AG04449 (cell line): ENCODE measurements at regions of chr14 and their contacts with region 1.

Region 1: GRCh38 chr14:24241829-24242443 is 487 bp downstream of the TINF2 start:
- DNase-seq: no peak
- H3K4me3 ChIP-seq: peak overlapping the region; percentile 91
- CTCF ChIP-seq: peak; percentile 65

Region 2: DNA sequence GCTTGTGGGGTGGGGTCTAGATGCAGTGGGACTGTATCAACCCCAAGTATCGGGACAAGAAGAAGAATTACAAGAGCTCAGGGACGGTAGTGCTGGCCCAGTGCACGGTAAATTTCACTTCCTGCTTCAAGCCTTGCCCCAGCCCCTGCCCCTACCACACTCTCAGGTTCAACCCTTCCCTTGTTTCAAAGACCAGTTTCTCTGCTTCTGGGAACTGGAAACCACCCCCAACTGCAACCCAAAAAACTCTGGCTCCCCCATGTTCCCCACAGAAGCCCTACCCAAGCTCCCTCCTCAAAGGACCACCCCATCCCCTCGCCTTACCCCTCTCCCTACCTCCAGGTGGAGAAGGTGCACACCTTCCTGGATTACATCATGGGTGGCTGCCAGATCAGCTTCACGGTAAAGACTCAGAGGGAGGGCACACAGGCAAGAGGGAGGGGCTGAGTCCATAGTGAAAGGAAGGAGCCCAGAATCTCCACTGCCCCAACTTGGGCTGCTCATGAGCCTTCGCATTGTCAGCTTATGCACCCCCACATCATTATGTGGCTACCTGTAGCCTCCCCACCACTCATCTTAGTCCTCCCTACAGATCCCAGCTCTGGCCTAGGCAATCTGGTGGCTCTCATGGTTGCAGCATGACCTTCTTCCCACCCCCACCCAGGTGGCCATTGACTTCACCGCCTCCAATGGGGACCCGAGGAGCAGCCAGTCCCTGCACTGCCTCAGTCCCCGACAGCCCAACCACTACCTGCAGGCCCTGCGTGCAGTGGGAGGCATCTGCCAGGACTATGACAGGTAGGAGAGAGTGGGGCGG is 166.2 kb before region 1 on chr14:
- CTCF ChIA-PET with region 1: no interaction called
- POLR2A ChIA-PET with region 1: no interaction called
- DNase-seq: no peak
- H3K4me3 ChIP-seq: no peak overlapping the region
- CTCF ChIP-seq: no peak

Region 3: DNA sequence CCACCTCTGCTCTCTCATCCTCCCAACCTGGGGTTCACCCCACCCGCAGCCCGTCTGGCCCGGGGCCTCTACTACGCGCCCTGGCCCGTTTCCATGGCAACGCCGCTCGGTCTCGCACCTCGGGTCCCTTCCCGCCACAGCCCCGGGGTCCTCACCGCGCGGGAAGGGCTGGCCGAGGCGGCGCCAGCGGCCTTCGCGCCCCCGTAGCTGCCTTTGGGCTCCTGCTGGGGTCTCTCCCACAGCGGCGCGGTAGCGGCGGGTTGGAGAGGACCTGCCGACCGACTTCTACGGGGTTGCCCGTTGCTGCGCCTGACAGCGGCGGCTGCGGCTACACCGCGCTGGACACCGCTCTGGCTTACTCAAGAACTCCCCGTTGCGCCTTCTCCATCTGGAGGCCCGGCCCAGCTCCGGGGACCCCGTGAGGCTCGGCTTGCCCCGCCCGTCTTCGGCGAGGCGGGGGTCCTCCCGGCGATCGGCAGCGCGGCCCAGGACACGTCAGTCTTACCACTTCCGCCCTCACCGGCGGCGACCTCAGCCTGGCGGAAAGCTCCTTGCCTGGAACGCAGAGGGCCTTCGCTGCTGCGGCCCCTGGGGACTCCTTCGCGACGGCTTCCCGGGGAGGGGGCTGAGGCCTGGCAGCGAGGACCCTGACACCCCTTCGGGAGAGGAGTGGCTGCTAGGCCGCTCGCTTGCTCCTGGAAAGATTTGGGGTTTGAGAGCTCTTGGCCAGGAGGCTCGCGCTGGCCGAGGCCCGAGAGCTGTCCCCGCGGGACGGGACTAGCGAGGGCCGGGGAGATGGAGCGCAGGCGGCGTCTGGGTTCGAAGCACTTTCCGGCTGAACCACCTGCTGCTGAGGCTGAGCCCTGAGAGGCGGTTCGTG is 46.5 kb before region 1 on chr14 and contains the start of gene TM9SF1:
- CTCF ChIA-PET with region 1: interaction called, 6 read pairs
- POLR2A ChIA-PET with region 1: interaction called, 10 read pairs
- DNase-seq: peak; percentile 34
- H3K4me3 ChIP-seq: peak within 1 kb of the TSS; percentile 92
- CTCF ChIP-seq: no peak

Region 4: GRCh38 chr14:24259252-24259995 is 17.5 kb after region 1 on chr14:
- CTCF ChIA-PET with region 1: interaction called, 155 read pairs
- POLR2A ChIA-PET with region 1: interaction called, 6 read pairs
- DNase-seq: no peak
- H3K4me3 ChIP-seq: no peak overlapping the region
- CTCF ChIP-seq: no peak

Region 5: GRCh38 chr14:24279301-24280186 is 37.6 kb after region 1 on chr14:
- CTCF ChIA-PET with region 1: interaction called, 15 read pairs
- POLR2A ChIA-PET with region 1: no interaction called
- DNase-seq: no peak
- H3K4me3 ChIP-seq: no peak overlapping the region
- CTCF ChIP-seq: no peak

Region 6: GRCh38 chr14:24310646-24311604 is 69.0 kb after region 1 on chr14 and contains the start of gene LTB4R:
- CTCF ChIA-PET with region 1: interaction called, 118 read pairs
- POLR2A ChIA-PET with region 1: interaction called, 7 read pairs
- DNase-seq: no peak
- H3K4me3 ChIP-seq: peak within 1 kb of the TSS; percentile 33
- CTCF ChIP-seq: peak; percentile 48

Region 7: DNA sequence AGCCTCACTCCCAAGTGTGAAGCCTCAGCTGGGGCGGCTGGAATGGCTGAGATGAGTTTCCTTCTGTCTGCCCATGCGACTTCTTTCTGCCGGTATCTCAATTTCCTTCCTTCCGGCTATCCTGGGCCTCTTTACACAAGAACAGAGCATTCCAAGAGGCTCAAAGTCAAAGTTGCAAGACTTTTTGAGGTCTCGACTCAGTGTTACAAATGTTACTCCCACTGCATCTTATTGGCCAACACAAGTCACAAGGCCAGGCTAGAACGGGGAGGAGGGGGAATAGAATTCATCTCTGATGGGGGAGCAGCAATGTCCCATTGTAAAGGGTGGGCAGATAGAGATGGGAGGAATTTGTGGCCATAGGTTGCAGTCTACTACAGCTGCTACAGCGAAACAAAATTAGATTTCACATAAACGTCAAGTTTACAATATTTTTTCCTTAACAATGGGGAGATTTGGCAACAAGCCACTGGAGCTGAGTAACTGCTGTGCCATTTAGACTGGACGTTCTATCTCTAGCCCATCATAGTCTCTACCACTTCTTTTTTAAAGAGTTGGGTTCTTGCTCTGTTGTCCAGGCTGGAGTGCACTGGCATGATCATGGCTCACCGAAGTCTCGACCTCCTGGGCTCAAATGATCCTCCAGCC is 147.4 kb after region 1 on chr14:
- CTCF ChIA-PET with region 1: no interaction called
- POLR2A ChIA-PET with region 1: no interaction called
- DNase-seq: no peak
- H3K4me3 ChIP-seq: no peak overlapping the region
- CTCF ChIP-seq: no peak